ENCODE measurements at regions of chr1 and their contacts with region 1.

Region 1: GRCh38 chr1:88983791-88984559 is 8.5 kb downstream of the KYAT3 start:
- DNase-seq: peak; percentile 64
- ATAC-seq: peak; percentile 87
- H3K4me3 ChIP-seq: peak overlapping the region; percentile 46 to 61
- H3K27ac ChIP-seq: peak overlapping the region; percentile 68
- H3K4me1 ChIP-seq: peaks cover 17% of the 10 kb centered on the region
- H3K27me3 ChIP-seq: no peaks in the 10 kb centered on the region
- CTCF ChIP-seq: peak; percentile 86

Region 2: GRCh38 chr1:88973520-88974137 is 10.3 kb before region 1 on chr1:
- CTCF ChIA-PET with region 1: interaction called, 10 read pairs
- POLR2A ChIA-PET with region 1: interaction called, 12 read pairs
- in situ Hi-C with region 1: no loop called
- intact Hi-C with region 1: no loop called
- DNase-seq: no peak
- ATAC-seq: peak; percentile 70
- H3K4me3 ChIP-seq: no peak overlapping the region
- H3K27ac ChIP-seq: no peak overlapping the region
- H3K4me1 ChIP-seq: no peaks in the 10 kb centered on the region
- H3K27me3 ChIP-seq: no peaks in the 10 kb centered on the region
- CTCF ChIP-seq: peak; percentile 78

Measured in Panc1 (cell line).